ENCODE measurements at regions of chr10 and their contacts with region 1.

Region 1: DNA sequence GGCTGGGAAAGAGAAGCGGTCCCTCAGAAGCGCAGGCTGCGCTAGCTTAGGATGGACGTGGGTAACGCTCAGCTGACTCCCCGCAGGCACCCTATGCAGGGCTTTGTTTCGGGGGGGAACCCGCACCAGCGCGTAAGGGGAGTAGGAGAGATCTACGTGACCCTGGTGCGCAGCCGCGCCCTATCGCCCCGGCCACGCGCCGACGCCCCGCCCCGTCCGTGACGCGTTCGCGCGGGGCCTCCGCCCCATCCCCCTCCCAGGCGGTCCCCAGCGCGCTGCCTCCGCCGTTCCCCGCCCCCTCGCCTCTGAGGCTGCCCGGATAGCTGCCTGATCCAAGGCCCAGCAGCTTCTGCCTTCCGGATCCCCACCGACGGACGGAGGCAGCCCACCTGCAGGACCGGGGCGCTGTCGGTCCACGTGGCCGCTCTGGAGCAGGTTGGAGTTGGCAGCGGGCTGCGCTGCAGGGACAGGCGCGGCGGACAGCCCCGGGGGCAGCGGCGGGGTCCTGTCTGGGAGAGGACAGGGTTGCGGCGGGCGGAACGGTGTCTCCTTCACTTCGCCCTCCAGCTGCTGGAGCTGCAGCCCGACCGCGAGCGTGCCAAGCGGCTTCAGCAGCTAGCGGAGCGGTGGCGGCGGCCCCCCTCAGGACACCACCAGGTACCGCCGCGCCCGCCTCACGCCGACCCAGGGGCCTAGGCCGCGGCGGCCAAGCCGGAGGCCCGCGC is at the start of gene VDAC2:
- DNase-seq: peak; percentile 98
- ATAC-seq: peak; percentile 89
- H3K4me3 Mint-ChIP-seq: peak within 1 kb of the TSS; percentile 99
- H3K27ac Mint-ChIP-seq: peak within 1 kb of the TSS; percentile 100
- H3K4me1 Mint-ChIP-seq: peaks cover 27% of the 10 kb centered on the region
- H3K27me3 Mint-ChIP-seq: no peaks in the 10 kb centered on the region
- CTCF ChIP-seq: no peak
- total RNA-seq, gene VDAC2: 99.0 and 104 TPM in 2 replicates

Region 2: GRCh38 chr10:73252445-73253224 is 1957.8 kb before region 1 on chr10 and contains the start of gene MRPS16:
- CTCF ChIA-PET with region 1: no interaction called
- POLR2A ChIA-PET with region 1: no interaction called
- intact Hi-C with region 1: loop called (anchors 2 kb)
- DNase-seq: peak; percentile 84
- ATAC-seq: peak; percentile 89
- H3K4me3 Mint-ChIP-seq: peak within 1 kb of the TSS; percentile 99
- H3K27ac Mint-ChIP-seq: peak within 1 kb of the TSS; percentile 95
- H3K4me1 Mint-ChIP-seq: peaks cover 44% of the 10 kb centered on the region
- H3K27me3 Mint-ChIP-seq: no peaks in the 10 kb centered on the region
- CTCF ChIP-seq: no peak
- total RNA-seq, gene MRPS16: 85.9 and 88.5 TPM in 2 replicates

Region 3: GRCh38 chr10:74704629-74705357 is 505.7 kb before region 1 on chr10:
- CTCF ChIA-PET with region 1: no interaction called
- POLR2A ChIA-PET with region 1: interaction called, 10 read pairs
- intact Hi-C with region 1: no loop called
- DNase-seq: no peak
- ATAC-seq: no peak
- H3K4me3 Mint-ChIP-seq: no peak overlapping the region
- H3K27ac Mint-ChIP-seq: no peak overlapping the region
- H3K4me1 Mint-ChIP-seq: no peaks in the 10 kb centered on the region
- H3K27me3 Mint-ChIP-seq: no peaks in the 10 kb centered on the region
- CTCF ChIP-seq: no peak

Region 4: DNA sequence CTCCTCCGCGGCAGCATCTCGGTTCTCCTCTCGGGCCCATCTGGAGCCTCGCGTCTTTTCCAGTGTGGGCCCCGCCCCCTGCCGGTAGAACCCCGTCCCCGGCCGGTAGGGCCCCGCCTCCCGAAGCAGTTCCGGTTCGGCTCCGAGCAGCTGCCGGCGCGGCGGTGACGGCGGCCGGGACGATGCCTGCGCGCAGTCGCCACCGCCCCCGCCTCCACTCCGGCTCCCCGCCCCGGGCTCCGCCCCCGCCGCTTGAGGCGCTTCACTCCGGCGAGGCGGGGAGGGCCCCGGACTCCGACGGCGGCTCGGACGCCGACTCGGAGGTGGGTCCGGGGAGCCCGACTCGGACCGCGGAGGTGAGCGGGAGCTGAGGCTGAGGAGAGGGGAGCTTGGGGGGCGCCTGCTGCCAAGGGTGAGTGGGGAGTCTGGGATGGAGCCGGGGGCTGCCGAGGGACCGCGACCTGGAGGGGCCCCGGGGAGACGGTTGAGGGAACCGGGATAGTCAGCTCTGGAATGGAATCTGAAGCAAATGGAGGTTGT is 99.0 kb before region 1 on chr10 and contains the start of gene SAMD8:
- CTCF ChIA-PET with region 1: no interaction called
- POLR2A ChIA-PET with region 1: interaction called, 34 read pairs
- intact Hi-C with region 1: loop called (anchors 1 kb)
- DNase-seq: peak; percentile 95
- ATAC-seq: peak; percentile 81
- H3K4me3 Mint-ChIP-seq: peak within 1 kb of the TSS; percentile 90
- H3K27ac Mint-ChIP-seq: peak within 1 kb of the TSS; percentile 90
- H3K4me1 Mint-ChIP-seq: peaks cover 45% of the 10 kb centered on the region
- H3K27me3 Mint-ChIP-seq: no peaks in the 10 kb centered on the region
- CTCF ChIP-seq: no peak
- total RNA-seq, gene SAMD8: 25.8 and 29.1 TPM in 2 replicates

Region 5: DNA sequence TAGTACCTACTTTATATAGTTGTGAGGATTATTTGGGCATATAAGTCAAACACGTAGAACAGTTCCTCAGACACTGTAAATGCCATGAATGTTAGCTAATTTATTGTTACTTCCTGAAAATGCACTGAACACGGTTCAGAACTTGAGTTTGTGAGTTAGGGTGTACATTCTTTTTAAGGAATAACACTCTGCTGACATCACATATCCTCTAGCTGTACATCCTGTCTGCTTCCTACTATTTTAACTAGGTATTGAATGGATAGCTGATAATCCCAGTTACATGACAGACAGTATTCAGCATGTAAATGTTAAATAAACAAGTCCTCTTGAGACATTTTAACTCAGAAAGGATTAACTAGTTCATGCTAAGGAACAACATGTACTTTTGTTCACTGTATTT is 83.0 kb before region 1 on chr10:
- CTCF ChIA-PET with region 1: no interaction called
- POLR2A ChIA-PET with region 1: interaction called, 3 read pairs
- intact Hi-C with region 1: loop called (anchors 5 kb)
- DNase-seq: no peak
- ATAC-seq: no peak
- H3K4me3 Mint-ChIP-seq: no peak overlapping the region
- H3K27ac Mint-ChIP-seq: peak overlapping the region; percentile 12
- H3K4me1 Mint-ChIP-seq: peaks cover 58% of the 10 kb centered on the region
- H3K27me3 Mint-ChIP-seq: no peaks in the 10 kb centered on the region
- CTCF ChIP-seq: no peak

Region 6: DNA sequence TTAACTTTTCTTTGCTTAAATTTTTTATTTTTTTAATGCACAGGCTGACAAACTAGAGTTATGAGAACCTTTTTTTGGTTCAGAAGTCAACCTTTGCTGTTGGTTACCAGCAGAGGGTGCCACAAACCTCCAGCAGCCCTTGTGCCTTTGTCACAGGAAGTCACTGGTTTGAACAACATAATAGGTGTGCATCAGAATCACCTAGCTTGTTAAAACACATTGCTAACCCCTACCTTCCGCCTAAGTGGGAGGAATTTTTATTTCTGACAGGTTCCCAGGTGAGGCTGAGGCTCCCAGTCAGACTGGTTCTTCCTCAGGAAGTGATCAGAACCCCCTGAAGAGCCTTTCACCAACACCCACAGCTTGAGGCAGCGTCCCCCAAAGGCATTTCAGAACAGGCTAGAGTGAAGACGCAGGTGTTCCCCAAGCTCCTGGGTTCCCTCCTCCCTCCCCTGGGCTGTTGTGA is 22.4 kb before region 1 on chr10:
- CTCF ChIA-PET with region 1: interaction called, 13 read pairs
- POLR2A ChIA-PET with region 1: interaction called, 18 read pairs
- intact Hi-C with region 1: loop called (anchors 1 kb)
- DNase-seq: no peak
- ATAC-seq: peak; percentile 78
- H3K4me3 Mint-ChIP-seq: no peak overlapping the region
- H3K27ac Mint-ChIP-seq: peak overlapping the region; percentile 30
- H3K4me1 Mint-ChIP-seq: peaks cover 5% of the 10 kb centered on the region
- H3K27me3 Mint-ChIP-seq: no peaks in the 10 kb centered on the region
- CTCF ChIP-seq: no peak

Region 7: DNA sequence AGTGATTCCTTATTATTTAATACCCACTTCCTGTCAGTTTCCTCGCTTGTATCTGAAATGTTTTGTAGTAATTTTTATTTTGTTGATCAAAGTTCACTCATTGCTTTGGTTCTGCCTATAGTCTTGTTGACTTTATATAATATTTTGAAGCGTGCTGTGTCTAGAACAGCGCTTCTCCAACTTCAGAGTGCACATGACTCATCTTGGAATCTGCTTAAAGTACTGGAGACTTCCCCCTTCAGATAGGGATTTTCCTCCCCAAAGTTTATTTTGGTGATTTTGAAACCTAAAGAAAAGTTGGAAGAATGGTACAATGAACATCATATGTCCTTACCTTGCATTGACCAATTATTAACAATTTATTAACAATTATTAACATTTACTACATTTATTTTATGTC is 19.5 kb after region 1 on chr10:
- CTCF ChIA-PET with region 1: interaction called, 20 read pairs
- POLR2A ChIA-PET with region 1: interaction called, 60 read pairs
- intact Hi-C with region 1: loop called (anchors 1 kb)
- DNase-seq: no peak
- ATAC-seq: no peak
- H3K4me3 Mint-ChIP-seq: no peak overlapping the region
- H3K27ac Mint-ChIP-seq: no peak overlapping the region
- H3K4me1 Mint-ChIP-seq: peaks cover 40% of the 10 kb centered on the region
- H3K27me3 Mint-ChIP-seq: no peaks in the 10 kb centered on the region
- CTCF ChIP-seq: no peak

Measured in activated B cell treated with CpG ODN at 0.5 μM for 24 hours (primary cell).